ENCODE measurements at regions of chr12 and their contacts with region 1.

Region 1: GRCh38 chr12:9741726-9742125 is 8.8 kb upstream of the CLECL1 start:
- DNase-seq: peak; percentile 86
- H3K4me3 ChIP-seq: peak overlapping the region; percentile 54
- H3K27ac ChIP-seq: peak overlapping the region; percentile 93
- H3K4me1 ChIP-seq: peaks cover 83% of the 10 kb centered on the region
- CTCF ChIP-seq: no peak

Region 2: GRCh38 chr12:9331218-9331626 is 410.5 kb before region 1 on chr12:
- CTCF ChIA-PET with region 1: no interaction called
- POLR2A ChIA-PET with region 1: no interaction called
- intact Hi-C with region 1: loop called (anchors 5 kb)
- DNase-seq: peak; percentile 62
- H3K4me3 ChIP-seq: no peak overlapping the region
- H3K27ac ChIP-seq: no peak overlapping the region
- H3K4me1 ChIP-seq: no peaks in the 10 kb centered on the region
- CTCF ChIP-seq: peak; percentile 100

Region 3: GRCh38 chr12:9721394-9722092 is 20.2 kb before region 1 on chr12:
- CTCF ChIA-PET with region 1: interaction called, 4 read pairs
- POLR2A ChIA-PET with region 1: interaction called, 32 read pairs
- intact Hi-C with region 1: no loop called
- DNase-seq: peak; percentile 92
- H3K4me3 ChIP-seq: peak overlapping the region; percentile 42
- H3K27ac ChIP-seq: peak overlapping the region; percentile 99
- H3K4me1 ChIP-seq: peaks cover 100% of the 10 kb centered on the region
- CTCF ChIP-seq: no peak

Measured in OCI-LY7 (cell line).